ENCODE measurements at regions of chr1 and their contacts with region 1.

Region 1: DNA sequence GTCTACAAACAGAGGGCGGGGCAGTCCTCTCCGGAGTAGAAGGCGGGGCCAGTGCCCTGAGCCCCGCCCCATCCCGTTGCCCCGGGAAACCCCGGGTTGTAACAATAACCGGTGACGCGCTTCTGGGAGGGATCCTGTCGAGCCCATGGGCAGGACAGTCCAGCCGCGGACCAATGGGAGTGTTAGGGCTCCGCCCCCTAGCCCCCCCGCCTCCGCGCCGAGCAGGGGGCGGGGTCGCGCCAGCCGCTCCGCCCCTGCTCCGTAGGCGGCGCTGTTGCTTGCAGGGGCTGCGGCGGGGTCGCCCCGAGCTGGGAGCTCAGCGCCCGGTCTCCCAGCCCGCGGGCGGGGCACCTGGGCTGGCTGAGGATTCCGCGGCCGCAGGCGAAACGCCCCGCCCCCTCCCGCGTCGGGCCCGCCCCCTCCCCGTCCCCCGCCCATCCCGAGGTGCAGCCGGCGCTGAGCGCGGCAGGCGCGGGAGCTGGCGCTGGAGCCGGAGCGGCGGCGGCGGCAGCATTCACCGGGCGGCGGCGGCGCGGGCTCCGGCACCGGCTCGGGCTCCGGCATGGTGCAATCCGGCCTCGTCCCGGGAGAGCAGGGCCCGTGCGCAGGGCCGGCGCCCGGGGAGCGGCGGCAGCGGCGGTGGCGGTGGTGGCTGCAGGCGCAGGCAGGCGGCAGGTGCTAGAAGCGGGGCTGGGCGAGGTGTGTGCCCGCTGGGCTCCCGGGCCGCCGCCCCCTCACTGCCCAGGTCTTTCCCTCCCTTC is at the start of gene FOXO6:
- DNase-seq: peak; percentile 99
- ATAC-seq: peak; percentile 93
- H3K4me3 ChIP-seq: peak within 1 kb of the TSS; percentile 66
- H3K27ac ChIP-seq: no peak within 1 kb of the TSS
- H3K4me1 ChIP-seq: peaks cover 27% of the 10 kb centered on the region
- H3K27me3 ChIP-seq: peaks cover 10% of the 10 kb centered on the region
- CTCF ChIP-seq: 0 out of 2 replicates have a peak, but pooled peaks have one; percentile 19
- total RNA-seq, gene FOXO6: 1.2 and 5.4 TPM in 2 replicates

Region 2: GRCh38 chr1:40862008-40862863 is 498.9 kb before region 1 on chr1 and contains the start of gene CITED4:
- CTCF ChIA-PET with region 1: no interaction called
- POLR2A ChIA-PET with region 1: no interaction called
- intact Hi-C with region 1: no loop called
- DNase-seq: peak; percentile 96
- ATAC-seq: peak; percentile 95
- H3K4me3 ChIP-seq: peak within 1 kb of the TSS; percentile 73
- H3K27ac ChIP-seq: no peak within 1 kb of the TSS
- H3K4me1 ChIP-seq: peaks cover 7% of the 10 kb centered on the region
- H3K27me3 ChIP-seq: no peaks in the 10 kb centered on the region
- CTCF ChIP-seq: peak; percentile 43; the same call in 1 of the 2 replicates
- total RNA-seq, gene CITED4: 10.6 and 12.0 TPM in 2 replicates

Region 3: GRCh38 chr1:41381692-41382477 is 20.7 kb after region 1 on chr1:
- CTCF ChIA-PET with region 1: interaction called, 11 read pairs
- POLR2A ChIA-PET with region 1: no interaction called
- intact Hi-C with region 1: no loop called
- DNase-seq: peak; percentile 72
- ATAC-seq: peak; percentile 72
- H3K4me3 ChIP-seq: peak overlapping the region; percentile 78
- H3K27ac ChIP-seq: peak overlapping the region; percentile 56
- H3K4me1 ChIP-seq: peaks cover 18% of the 10 kb centered on the region
- H3K27me3 ChIP-seq: no peaks in the 10 kb centered on the region
- CTCF ChIP-seq: no peak

Region 4: GRCh38 chr1:41537788-41538351 is 176.7 kb after region 1 on chr1:
- CTCF ChIA-PET with region 1: no interaction called
- POLR2A ChIA-PET with region 1: no interaction called
- intact Hi-C with region 1: no loop called
- DNase-seq: peak; percentile 57
- ATAC-seq: peak; percentile 79
- H3K4me3 ChIP-seq: no peak overlapping the region
- H3K27ac ChIP-seq: no peak overlapping the region
- H3K4me1 ChIP-seq: no peaks in the 10 kb centered on the region
- H3K27me3 ChIP-seq: no peaks in the 10 kb centered on the region
- CTCF ChIP-seq: no peak

Region 5: GRCh38 chr1:41589395-41589794 is 228.2 kb after region 1 on chr1:
- CTCF ChIA-PET with region 1: no interaction called
- POLR2A ChIA-PET with region 1: no interaction called
- intact Hi-C with region 1: no loop called
- DNase-seq: no peak
- ATAC-seq: no peak
- H3K4me3 ChIP-seq: no peak overlapping the region
- H3K27ac ChIP-seq: no peak overlapping the region
- H3K4me1 ChIP-seq: no peaks in the 10 kb centered on the region
- H3K27me3 ChIP-seq: no peaks in the 10 kb centered on the region
- CTCF ChIP-seq: no peak